ENCODE measurements at regions of chr9 and their contacts with region 1.

Region 1: DNA sequence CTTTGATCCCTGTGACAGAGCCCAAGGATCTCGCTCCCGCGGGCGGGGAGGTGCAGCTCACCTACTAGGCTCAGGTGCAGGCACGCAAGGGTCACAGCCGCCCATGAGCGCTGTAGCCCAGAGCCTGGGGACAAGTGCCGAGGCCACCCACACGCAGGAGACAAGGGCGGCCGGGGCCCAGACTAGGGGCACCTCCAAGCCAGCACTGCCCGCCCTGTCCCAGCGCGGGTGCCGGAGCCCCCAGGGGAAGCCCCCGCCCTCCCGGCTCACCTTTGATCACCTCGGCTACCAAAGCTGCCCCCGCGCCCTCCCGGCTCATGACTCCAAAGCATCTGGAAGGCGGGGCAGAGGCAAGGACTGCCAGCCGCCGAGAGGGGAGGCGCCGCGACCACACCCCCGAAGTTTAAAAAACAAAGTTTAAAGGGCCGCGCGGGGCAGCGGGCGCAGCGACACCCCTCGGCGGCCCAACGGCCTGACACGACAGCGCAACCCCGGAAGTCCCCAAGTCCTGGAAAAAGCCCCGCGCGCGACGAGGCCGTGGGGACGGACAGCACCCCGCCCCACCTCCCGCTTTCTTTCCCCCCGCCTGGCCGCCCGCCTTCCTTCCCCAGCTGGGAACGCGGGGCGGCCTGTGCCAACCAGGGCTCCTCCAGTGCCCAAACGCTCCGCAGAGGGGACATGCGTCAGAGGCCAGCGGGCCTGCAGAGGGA is 53.0 kb downstream of the CDC14B start:
- DNase-seq: peak; percentile 74 to 91 (median 81)
- H3K4me3 ChIP-seq: peak overlapping the region; percentile 82
- H3K4me3 Mint-ChIP-seq: peak overlapping the region; percentile 88 to 93 (median 91)
- H3K27ac ChIP-seq: peak overlapping the region; percentile 84
- H3K27ac Mint-ChIP-seq: peak overlapping the region; percentile 76 to 95 (median 84)
- H3K4me1 ChIP-seq: peaks cover 20% of the 10 kb centered on the region
- H3K4me1 Mint-ChIP-seq: peaks cover 28 to 36% (median 31%) of the 10 kb centered on the region in 3 donors
- H3K27me3 ChIP-seq: no peaks in the 10 kb centered on the region
- H3K27me3 Mint-ChIP-seq: peaks cover 0 to 3% of the 10 kb centered on the region in 2 donors

Region 2: DNA sequence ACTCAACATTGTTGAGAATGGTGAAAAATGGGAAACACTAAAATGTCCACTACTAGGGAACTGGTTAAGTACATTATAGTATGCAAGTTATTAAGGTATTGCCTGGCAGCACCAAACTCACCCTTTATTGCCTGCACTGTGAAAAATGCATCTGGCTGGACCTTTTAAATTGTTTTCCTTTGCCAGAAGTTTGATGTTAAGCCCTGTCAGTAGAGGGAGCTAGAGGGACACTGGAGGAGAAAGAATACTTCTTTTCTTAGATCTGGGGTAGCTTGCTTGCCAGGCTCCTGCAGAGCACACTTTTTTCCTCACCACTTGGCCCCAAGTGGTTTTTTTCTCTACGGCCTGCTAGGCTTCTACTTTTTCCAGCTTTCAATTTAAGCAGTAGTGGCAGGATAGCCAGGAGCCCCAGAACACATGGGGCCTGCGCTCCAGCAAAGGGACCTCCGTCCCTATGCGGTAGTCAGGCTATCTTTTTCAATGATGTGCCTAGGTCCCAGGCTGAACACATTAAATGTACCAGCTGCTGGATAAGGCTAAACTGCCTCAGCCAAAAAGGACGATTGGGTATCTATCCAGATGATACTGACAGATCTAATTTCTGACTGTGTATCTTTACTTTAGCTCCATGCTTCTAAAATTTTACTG is 124.7 kb before region 1 on chr9:
- CTCF ChIA-PET with region 1: interaction called, 11 read pairs
- POLR2A ChIA-PET with region 1: no interaction called
- DNase-seq: no peak
- H3K4me3 ChIP-seq: no peak overlapping the region
- H3K4me3 Mint-ChIP-seq: no peak overlapping the region
- H3K27ac ChIP-seq: no peak overlapping the region
- H3K27ac Mint-ChIP-seq: no peak overlapping the region
- H3K4me1 ChIP-seq: no peaks in the 10 kb centered on the region
- H3K4me1 Mint-ChIP-seq: no peaks in the 10 kb centered on the region
- H3K27me3 ChIP-seq: no peaks in the 10 kb centered on the region
- H3K27me3 Mint-ChIP-seq: no peaks in the 10 kb centered on the region

Region 3: GRCh38 chr9:96449845-96450612 is 116.6 kb before region 1 on chr9 and contains the start of gene HABP4:
- CTCF ChIA-PET with region 1: interaction called, 4 read pairs
- POLR2A ChIA-PET with region 1: interaction called, 22 read pairs
- DNase-seq: peak; percentile 94 to 97 (median 95)
- H3K4me3 ChIP-seq: peak within 1 kb of the TSS; percentile 75
- H3K4me3 Mint-ChIP-seq: peak within 1 kb of the TSS; percentile 89 to 96 (median 94)
- H3K27ac ChIP-seq: peak within 1 kb of the TSS; percentile 57
- H3K27ac Mint-ChIP-seq: peak within 1 kb of the TSS; percentile 60 to 95 (median 90)
- H3K4me1 ChIP-seq: peaks cover 18% of the 10 kb centered on the region
- H3K4me1 Mint-ChIP-seq: peaks cover 19 to 29% (median 28%) of the 10 kb centered on the region in 3 donors
- H3K27me3 ChIP-seq: no peaks in the 10 kb centered on the region
- H3K27me3 Mint-ChIP-seq: peaks cover 0 to 1% of the 10 kb centered on the region in 2 donors
- total RNA-seq, gene HABP4: 20.4 to 21.0 TPM

Region 4: GRCh38 chr9:96523374-96523773 is 43.3 kb before region 1 on chr9:
- CTCF ChIA-PET with region 1: no interaction called
- POLR2A ChIA-PET with region 1: no interaction called
- DNase-seq: no peak
- H3K4me3 ChIP-seq: no peak overlapping the region
- H3K4me3 Mint-ChIP-seq: no peak overlapping the region
- H3K27ac ChIP-seq: no peak overlapping the region
- H3K27ac Mint-ChIP-seq: peak overlapping the region in 1 of 8 donors; percentile 57
- H3K4me1 ChIP-seq: no peaks in the 10 kb centered on the region
- H3K4me1 Mint-ChIP-seq: peaks cover 8 to 21% (median 18%) of the 10 kb centered on the region in 3 donors
- H3K27me3 ChIP-seq: no peaks in the 10 kb centered on the region
- H3K27me3 Mint-ChIP-seq: no peaks in the 10 kb centered on the region

Region 5: DNA sequence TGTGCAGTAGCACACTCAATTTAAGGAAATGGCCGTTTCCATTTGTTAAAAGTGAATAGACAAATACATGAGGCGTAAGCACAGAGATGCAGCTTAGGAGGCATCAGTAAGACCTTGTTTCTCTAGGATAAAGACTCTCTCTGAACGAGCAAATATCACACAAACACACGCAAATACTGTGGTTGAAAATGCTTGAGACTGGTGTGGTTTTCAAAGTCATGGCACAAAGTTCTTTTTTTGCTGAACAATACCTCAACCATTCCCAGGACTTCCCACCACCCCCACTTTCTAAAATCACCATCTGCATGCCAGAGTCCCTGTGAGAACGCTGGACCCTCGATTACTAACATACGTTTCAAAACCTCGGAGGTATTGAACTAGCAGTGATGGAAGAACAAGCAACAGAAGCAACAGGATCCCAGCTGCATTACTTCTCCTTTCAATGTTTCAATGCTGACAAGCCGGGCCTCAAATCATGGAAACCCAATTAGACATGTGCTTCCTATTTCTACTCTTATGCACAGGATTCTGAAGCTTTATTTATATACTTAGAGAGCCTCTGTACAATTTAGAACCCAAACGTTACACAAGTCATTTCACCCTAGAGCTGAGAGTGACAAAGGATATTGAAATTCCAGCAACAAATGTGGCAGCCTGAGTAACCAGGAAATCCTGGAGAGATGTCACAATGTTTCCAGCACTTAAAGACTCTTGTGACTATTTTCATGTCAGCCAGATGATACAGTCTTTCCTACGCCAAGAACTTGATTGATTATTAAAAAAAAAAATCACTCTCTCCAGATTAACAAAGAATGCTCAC is 10.9 kb before region 1 on chr9:
- CTCF ChIA-PET with region 1: interaction called, 11 read pairs
- POLR2A ChIA-PET with region 1: no interaction called
- DNase-seq: no peak
- H3K4me3 ChIP-seq: no peak overlapping the region
- H3K4me3 Mint-ChIP-seq: no peak overlapping the region
- H3K27ac ChIP-seq: no peak overlapping the region
- H3K27ac Mint-ChIP-seq: peak overlapping the region in 2 of 8 donors; percentile 17 to 29
- H3K4me1 ChIP-seq: no peaks in the 10 kb centered on the region
- H3K4me1 Mint-ChIP-seq: peaks cover 0 to 32% (median 2%) of the 10 kb centered on the region in 3 donors
- H3K27me3 ChIP-seq: no peaks in the 10 kb centered on the region
- H3K27me3 Mint-ChIP-seq: no peaks in the 10 kb centered on the region

Region 6: GRCh38 chr9:96654443-96655197 is 88.0 kb after region 1 on chr9:
- CTCF ChIA-PET with region 1: interaction called, 10 read pairs
- POLR2A ChIA-PET with region 1: interaction called, 7 read pairs
- DNase-seq: peak; percentile 74 to 91 (median 88)
- H3K4me3 ChIP-seq: peak overlapping the region; percentile 61
- H3K4me3 Mint-ChIP-seq: peak overlapping the region; percentile 92 to 98 (median 95)
- H3K27ac ChIP-seq: peak overlapping the region; percentile 85
- H3K27ac Mint-ChIP-seq: peak overlapping the region; percentile 94 to 99 (median 98)
- H3K4me1 ChIP-seq: peaks cover 8% of the 10 kb centered on the region
- H3K4me1 Mint-ChIP-seq: peaks cover 21 to 30% (median 30%) of the 10 kb centered on the region in 3 donors
- H3K27me3 ChIP-seq: no peaks in the 10 kb centered on the region
- H3K27me3 Mint-ChIP-seq: peaks cover 0 to 2% of the 10 kb centered on the region in 2 donors

Region 7: DNA sequence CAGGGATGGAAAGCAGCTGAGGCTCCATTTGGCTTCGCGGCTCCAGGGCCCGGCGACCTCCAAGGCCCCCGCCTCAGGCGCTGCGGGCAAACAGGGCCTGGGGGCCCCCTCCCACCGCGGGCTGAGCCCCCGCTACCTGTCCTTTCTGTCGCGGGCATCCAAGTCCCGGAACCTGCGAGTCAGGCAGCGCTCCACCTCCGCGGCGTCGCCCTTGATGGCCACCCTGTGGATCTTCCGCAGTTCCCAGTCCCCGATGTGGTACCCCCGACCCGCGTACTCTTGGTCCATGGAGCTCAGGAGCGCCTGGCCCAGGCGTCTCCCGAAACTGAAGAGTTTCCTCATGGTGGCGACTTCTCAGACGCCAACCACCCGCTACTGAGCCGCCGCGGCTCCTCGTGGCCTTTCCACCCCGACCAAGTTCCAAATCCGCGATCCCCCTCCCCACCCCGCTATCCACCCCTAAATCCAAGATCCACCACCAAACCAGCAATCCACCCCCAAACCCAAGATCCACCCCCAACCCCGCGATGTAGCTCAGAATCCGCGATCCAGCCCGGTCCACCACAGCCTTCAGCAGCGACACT is 654.3 kb after region 1 on chr9:
- CTCF ChIA-PET with region 1: no interaction called
- POLR2A ChIA-PET with region 1: no interaction called
- DNase-seq: peak in 1 of 5 donors; percentile 0
- H3K4me3 ChIP-seq: no peak overlapping the region
- H3K4me3 Mint-ChIP-seq: peak overlapping the region; percentile 70 to 92 (median 86)
- H3K27ac ChIP-seq: no peak overlapping the region
- H3K27ac Mint-ChIP-seq: peak overlapping the region in 3 of 8 donors; percentile 7 to 49 (median 40)
- H3K4me1 ChIP-seq: peaks cover 6% of the 10 kb centered on the region
- H3K4me1 Mint-ChIP-seq: peaks cover 6 to 10% (median 8%) of the 10 kb centered on the region in 3 donors
- H3K27me3 ChIP-seq: peaks cover 17% of the 10 kb centered on the region
- H3K27me3 Mint-ChIP-seq: peaks cover 33 to 43% of the 10 kb centered on the region in 2 donors